Activated CD4-positive, alpha-beta T cell treated with anti-CD3 and anti-CD28 coated beads, Interleukin-2, amount 10 ng/mL, durations not matched to agents 7 days and 5 days (primary cell): ENCODE measurements at regions of chr2 and their contacts with region 1.

Region 1: GRCh38 chr2:101733257-101733993 is 35.9 kb downstream of the MAP4K4 start:
- DNase-seq: no peak
- H3K4me3 Mint-ChIP-seq: no peak overlapping the region
- H3K27ac Mint-ChIP-seq: no peak overlapping the region
- H3K4me1 Mint-ChIP-seq: peaks cover 80% of the 10 kb centered on the region
- H3K27me3 Mint-ChIP-seq: no peaks in the 10 kb centered on the region

Region 2: GRCh38 chr2:101655702-101656422 is 77.6 kb before region 1 on chr2:
- CTCF ChIA-PET with region 1: no interaction called
- POLR2A ChIA-PET with region 1: no interaction called
- DNase-seq: no peak
- H3K4me3 Mint-ChIP-seq: no peak overlapping the region
- H3K27ac Mint-ChIP-seq: no peak overlapping the region
- H3K4me1 Mint-ChIP-seq: peaks cover 19% of the 10 kb centered on the region
- H3K27me3 Mint-ChIP-seq: no peaks in the 10 kb centered on the region

Region 3: DNA sequence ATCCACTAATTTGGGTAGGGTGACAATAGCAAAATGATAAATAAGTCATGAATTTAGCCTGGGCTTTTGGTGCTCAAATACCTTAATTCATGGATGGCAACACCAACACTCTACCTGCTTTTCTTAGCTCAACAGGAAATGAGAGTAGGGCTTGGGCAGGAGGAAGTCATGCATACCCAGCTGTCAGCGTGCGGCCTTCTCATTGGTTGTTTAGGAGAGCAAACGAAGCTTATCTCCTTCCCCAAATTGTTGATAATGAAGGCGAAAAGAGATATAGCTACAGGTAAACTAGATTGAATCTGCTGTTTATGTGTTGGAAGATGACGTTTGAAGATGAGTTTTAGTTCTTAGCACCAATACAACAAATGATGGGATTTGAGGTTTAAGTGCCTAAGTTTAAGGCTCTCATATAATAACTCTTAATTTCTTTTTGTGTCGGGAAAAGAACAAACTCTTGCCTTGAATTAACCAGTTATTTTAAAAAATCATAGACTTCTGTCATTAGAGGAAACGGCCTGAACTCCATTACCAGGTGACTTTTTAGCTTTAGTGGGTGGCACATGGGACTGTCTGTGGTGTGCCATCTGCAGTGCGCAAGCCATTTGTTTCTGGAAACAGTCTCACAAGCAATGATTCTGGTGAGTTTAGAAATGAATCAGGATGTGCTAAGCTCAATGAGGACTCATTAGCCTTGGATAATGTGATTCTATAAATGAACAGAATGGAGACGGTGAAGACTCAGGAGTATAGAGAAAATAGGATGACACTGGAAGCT is 16.2 kb before region 1 on chr2:
- CTCF ChIA-PET with region 1: interaction called, 16 read pairs
- POLR2A ChIA-PET with region 1: interaction called, 5 read pairs
- DNase-seq: peak; percentile 64
- H3K4me3 Mint-ChIP-seq: peak overlapping the region; percentile 25
- H3K27ac Mint-ChIP-seq: peak overlapping the region; percentile 82
- H3K4me1 Mint-ChIP-seq: peaks cover 71% of the 10 kb centered on the region
- H3K27me3 Mint-ChIP-seq: no peaks in the 10 kb centered on the region

Region 4: GRCh38 chr2:101759162-101759561 is 25.7 kb after region 1 on chr2:
- CTCF ChIA-PET with region 1: no interaction called
- POLR2A ChIA-PET with region 1: no interaction called
- DNase-seq: no peak
- H3K4me3 Mint-ChIP-seq: no peak overlapping the region
- H3K27ac Mint-ChIP-seq: no peak overlapping the region
- H3K4me1 Mint-ChIP-seq: peaks cover 59% of the 10 kb centered on the region
- H3K27me3 Mint-ChIP-seq: no peaks in the 10 kb centered on the region